ENCODE measurements at regions of chr1 and their contacts with region 1.

Region 1: GRCh38 chr1:151098126-151098525 is 27.6 kb downstream of the GABPB2 start:
- DNase-seq: no peak
- ATAC-seq: no peak
- H3K4me3 Mint-ChIP-seq: no peak overlapping the region
- H3K27ac Mint-ChIP-seq: no peak overlapping the region
- H3K4me1 Mint-ChIP-seq: no peaks in the 10 kb centered on the region
- H3K27me3 Mint-ChIP-seq: no peaks in the 10 kb centered on the region

Region 2: GRCh38 chr1:151024540-151025146 is 73.5 kb before region 1 on chr1:
- CTCF ChIA-PET with region 1: interaction called, 15 read pairs
- POLR2A ChIA-PET with region 1: no interaction called
- intact Hi-C with region 1: loop called in 1 of 2 experiments (anchors 1 kb)
- DNase-seq: peak; percentile 91
- ATAC-seq: peak; percentile 100
- H3K4me3 Mint-ChIP-seq: peak overlapping the region; percentile 30
- H3K27ac Mint-ChIP-seq: peak overlapping the region; percentile 65
- H3K4me1 Mint-ChIP-seq: peaks cover 5% of the 10 kb centered on the region
- H3K27me3 Mint-ChIP-seq: no peaks in the 10 kb centered on the region

Region 3: DNA sequence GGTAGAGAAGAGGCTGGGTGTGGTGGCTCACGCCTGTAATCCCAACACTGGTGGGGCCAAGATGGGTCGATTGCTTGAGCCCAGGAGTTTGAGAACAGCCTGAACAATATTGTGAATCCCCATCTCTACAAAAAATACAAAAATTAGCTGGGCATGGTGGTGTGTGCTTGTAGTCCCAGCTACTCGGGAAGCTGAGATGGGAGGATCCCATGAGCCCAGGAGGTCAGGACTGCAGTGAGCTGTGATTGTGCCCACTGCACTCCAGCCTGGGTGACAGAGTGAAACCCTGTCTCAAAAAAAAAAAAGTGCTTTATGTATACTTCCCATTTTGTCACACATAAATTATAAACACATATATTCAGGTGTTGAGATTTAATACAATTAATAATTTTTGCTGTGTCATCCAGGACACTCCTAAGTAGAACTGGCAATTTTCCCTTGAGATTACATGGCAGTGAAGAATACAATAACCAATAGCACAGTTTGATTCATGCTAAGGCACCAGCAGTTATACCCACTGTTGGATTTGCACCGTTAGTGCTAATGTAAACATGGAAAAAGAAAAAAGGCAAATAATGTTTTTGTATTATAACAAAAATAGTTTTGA is 12.1 kb before region 1 on chr1:
- CTCF ChIA-PET with region 1: interaction called, 10 read pairs
- POLR2A ChIA-PET with region 1: no interaction called
- intact Hi-C with region 1: no loop called
- DNase-seq: no peak
- ATAC-seq: no peak
- H3K4me3 Mint-ChIP-seq: no peak overlapping the region
- H3K27ac Mint-ChIP-seq: no peak overlapping the region
- H3K4me1 Mint-ChIP-seq: no peaks in the 10 kb centered on the region
- H3K27me3 Mint-ChIP-seq: no peaks in the 10 kb centered on the region

Region 4: DNA sequence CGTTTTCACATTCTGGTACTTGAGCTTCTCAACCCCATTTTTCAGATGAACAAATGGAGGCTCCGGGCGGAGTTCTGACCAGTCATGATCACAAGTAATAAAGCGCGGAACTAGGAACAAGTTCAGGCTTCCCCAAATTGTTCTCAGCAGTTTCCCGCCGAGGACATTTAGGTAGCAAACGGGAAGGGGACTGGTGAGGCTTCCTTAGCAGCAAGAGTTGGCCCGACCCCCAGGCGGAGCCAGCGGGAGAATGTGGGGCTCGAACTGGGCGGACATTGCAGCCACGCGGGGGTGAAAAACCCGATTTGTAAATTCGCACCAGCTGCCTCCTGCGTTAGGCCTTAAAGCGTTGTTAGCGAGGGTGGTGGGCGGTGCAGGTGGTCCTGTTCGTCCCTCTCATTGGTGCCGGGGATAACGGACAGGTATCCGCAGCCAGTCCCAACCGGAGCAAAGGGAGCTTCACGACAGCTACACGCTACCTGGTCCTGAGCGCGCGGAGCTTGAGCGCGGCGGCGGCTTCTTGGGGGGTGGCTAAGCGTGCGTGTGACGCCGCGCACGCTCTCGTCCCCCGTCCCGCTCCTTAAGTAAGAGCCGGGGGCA is 33.0 kb after region 1 on chr1:
- CTCF ChIA-PET with region 1: interaction called, 17 read pairs
- POLR2A ChIA-PET with region 1: interaction called, 5 read pairs
- intact Hi-C with region 1: no loop called
- DNase-seq: peak; percentile 93
- ATAC-seq: peak; percentile 100
- H3K4me3 Mint-ChIP-seq: peak overlapping the region; percentile 68
- H3K27ac Mint-ChIP-seq: peak overlapping the region; percentile 76
- H3K4me1 Mint-ChIP-seq: peaks cover 14% of the 10 kb centered on the region
- H3K27me3 Mint-ChIP-seq: no peaks in the 10 kb centered on the region

Measured in activated CD4-positive, alpha-beta T cell treated with anti-CD3 and anti-CD28 coated beads for 36 hours (primary cell).